ENCODE measurements at regions of chr11 and their contacts with region 1.

Region 1: GRCh38 chr11:13486926-13487660 is 8.7 kb downstream of the PTH start:
- DNase-seq: peak; percentile 66
- H3K4me3 Mint-ChIP-seq: peak overlapping the region; percentile 65
- H3K27ac Mint-ChIP-seq: no peak overlapping the region
- H3K4me1 Mint-ChIP-seq: peaks cover 6% of the 10 kb centered on the region
- H3K27me3 Mint-ChIP-seq: peaks cover 9% of the 10 kb centered on the region

Region 2: DNA sequence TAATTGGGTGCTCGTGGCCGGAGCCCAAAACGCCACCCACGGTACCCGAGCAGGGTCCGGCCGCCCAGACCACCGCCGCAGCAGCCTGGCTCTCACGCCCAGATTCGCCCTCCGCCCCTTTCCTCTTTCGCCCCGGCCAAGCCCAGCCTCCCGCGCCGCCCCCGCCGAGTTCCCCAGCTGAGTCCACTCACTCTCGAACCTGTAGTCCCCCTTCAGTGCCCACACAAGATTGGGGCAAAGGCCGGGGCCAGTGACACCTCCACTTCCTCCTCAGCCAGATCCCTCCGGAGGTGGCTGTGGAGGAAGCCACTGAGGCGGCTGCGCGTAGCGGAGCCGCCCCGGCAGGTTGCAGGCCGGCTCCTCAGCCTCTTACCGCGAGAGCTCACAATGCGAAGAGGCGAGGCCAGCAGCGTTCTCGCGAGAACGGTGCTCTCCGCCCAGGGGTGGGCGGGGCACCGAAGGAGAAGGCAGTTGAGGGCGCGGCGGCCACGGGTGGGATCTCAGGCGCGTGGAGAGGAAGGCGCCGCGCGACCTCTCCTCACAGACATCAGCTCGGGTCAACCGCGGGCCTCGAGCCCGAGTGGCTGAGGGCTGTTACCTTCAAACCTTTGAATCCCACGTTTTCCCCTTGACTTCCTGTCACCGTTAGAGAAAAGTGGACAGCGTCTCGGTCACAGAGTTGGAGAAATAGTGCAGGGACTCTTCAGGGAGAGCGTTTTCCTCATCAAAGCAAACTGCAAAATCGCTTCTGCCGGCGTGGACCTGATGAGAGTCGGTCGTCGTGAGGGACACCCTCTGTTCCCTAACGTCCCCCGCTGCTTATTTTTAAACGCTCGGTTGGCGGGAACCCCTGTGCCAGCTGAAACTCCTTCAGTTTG is 24.0 kb before region 1 on chr11 and contains the start of gene BTBD10:
- CTCF ChIA-PET with region 1: interaction called, 19 read pairs
- POLR2A ChIA-PET with region 1: interaction called, 8 read pairs
- DNase-seq: peak; percentile 94
- H3K4me3 Mint-ChIP-seq: peak within 1 kb of the TSS; percentile 97
- H3K27ac Mint-ChIP-seq: peak within 1 kb of the TSS; percentile 97
- H3K4me1 Mint-ChIP-seq: peaks cover 42% of the 10 kb centered on the region
- H3K27me3 Mint-ChIP-seq: peaks cover 4% of the 10 kb centered on the region
- total RNA-seq, gene BTBD10: 26.0 to 26.3 TPM

Region 3: GRCh38 chr11:13472001-13472400 is 15.1 kb before region 1 on chr11:
- CTCF ChIA-PET with region 1: interaction called, 12 read pairs
- POLR2A ChIA-PET with region 1: no interaction called
- DNase-seq: no peak
- H3K4me3 Mint-ChIP-seq: no peak overlapping the region
- H3K27ac Mint-ChIP-seq: no peak overlapping the region
- H3K4me1 Mint-ChIP-seq: no peaks in the 10 kb centered on the region
- H3K27me3 Mint-ChIP-seq: peaks cover 23% of the 10 kb centered on the region

Region 4: DNA sequence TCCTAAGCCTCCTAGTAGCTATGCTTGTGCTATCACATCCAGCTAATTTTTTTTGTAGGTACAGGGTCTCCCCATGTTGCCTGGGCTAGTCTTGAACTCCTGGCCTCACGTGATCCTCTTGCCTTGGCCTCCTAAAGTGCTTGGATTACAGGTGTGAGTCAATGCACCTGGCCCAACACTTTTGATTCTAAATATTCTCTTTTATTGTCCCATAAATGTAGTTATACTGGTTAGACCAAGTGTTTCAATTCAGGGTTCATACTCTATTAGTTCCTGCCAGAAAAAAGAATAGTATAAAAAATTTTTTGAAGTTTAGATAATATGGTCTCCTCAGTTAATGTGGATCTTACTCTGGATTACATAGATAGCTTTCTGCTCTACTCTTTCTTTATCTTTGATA is 15.4 kb after region 1 on chr11:
- CTCF ChIA-PET with region 1: interaction called, 11 read pairs
- POLR2A ChIA-PET with region 1: no interaction called
- DNase-seq: no peak
- H3K4me3 Mint-ChIP-seq: no peak overlapping the region
- H3K27ac Mint-ChIP-seq: no peak overlapping the region
- H3K4me1 Mint-ChIP-seq: no peaks in the 10 kb centered on the region
- H3K27me3 Mint-ChIP-seq: peaks cover 9% of the 10 kb centered on the region

Region 5: DNA sequence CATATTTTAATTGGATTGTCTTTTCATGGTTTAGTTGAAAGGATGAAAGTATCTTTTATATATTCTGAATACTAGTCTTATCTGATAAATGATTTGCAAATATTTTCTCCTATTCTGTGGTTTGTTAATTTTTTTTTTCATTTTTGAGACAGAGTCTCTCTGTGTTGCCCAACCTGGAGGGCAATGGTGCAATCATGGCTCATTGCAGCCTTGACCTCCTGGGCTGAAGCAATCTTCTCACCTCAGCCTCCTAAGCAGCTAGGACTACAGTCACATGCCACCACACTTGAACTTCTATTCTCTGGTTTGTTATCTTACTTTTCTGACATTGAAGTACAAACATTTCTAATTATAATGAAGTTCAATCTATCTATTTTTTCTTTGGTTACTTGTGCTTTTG is 151.3 kb after region 1 on chr11:
- CTCF ChIA-PET with region 1: no interaction called
- POLR2A ChIA-PET with region 1: no interaction called
- DNase-seq: no peak
- H3K4me3 Mint-ChIP-seq: no peak overlapping the region
- H3K27ac Mint-ChIP-seq: no peak overlapping the region
- H3K4me1 Mint-ChIP-seq: no peaks in the 10 kb centered on the region
- H3K27me3 Mint-ChIP-seq: peaks cover 24% of the 10 kb centered on the region

Region 6: DNA sequence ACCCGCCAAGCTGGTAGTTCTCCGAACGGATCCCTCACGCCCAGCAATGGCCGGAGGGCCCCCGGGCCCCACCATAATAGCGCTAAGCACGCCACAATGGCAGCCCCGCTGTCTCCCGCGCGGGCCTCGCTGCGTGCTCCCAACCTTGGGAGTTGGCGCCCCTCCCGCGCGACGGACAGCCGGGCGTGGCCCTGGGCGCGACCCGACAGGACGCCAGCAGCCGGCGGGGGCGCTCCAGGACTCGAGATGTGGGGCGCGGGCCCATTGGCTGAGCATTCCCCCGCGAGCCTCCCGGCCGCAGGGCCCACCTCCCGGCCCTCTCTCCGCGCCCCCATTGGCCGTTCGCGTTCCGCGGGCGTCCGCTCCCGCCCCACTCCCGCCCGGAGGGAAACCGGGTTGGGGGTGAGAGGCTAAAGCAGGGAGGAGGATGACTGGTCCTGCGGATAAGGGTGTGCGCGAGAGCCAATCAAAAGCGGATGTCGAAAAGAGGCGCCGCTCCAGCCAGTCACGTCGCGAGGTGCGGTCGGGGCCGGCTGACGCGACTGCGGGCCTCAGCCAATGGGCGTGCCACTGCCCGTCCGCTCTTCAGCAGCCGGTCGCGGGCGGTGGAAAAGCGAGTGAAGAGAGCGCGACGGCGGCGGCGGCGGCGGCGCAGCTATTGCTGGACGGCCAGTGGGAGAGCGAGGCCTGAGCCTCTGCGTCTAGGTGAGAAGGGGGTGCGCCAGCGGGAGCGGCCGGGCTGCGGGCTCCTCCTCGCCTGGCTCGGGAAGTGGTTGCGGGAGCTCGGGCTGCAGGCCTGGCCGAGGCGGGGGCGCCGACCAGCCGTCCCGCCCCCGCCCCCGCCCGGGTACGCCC is 181.2 kb after region 1 on chr11 and contains the start of gene FAR1:
- CTCF ChIA-PET with region 1: interaction called, 13 read pairs
- POLR2A ChIA-PET with region 1: no interaction called
- DNase-seq: peak; percentile 98
- H3K4me3 Mint-ChIP-seq: peak within 1 kb of the TSS; percentile 95
- H3K27ac Mint-ChIP-seq: peak within 1 kb of the TSS; percentile 93
- H3K4me1 Mint-ChIP-seq: peaks cover 44% of the 10 kb centered on the region
- H3K27me3 Mint-ChIP-seq: peaks cover 7% of the 10 kb centered on the region
- total RNA-seq, gene FAR1: 55.1 to 57.6 TPM

Measured in activated CD4-positive, alpha-beta memory T cell treated with anti-CD3 and anti-CD28 coated beads, Interleukin-2, amount 10 ng/mL, durations not matched to agents 7 days and 5 days (primary cell).